ENCODE measurements at regions of chr19 and their contacts with region 1.

Region 1: DNA sequence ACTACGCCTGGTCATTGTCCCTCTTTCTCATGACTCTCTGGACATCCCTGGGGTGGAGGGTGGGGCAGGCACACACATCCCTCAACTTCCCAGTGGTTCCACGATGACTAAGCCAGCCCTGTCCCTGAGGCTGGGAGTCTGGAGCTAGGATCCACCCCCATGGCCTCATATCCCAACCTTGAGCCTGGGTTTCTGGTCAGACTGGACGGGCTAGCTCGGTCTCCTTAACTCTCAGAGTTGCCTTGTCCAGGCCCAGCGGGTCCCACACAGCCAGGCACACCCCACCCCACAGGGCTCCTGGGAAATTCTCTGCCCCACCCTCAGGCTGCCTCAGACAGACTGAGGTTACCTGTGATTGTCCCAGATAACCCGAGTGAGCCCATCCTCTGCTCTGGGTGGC is 19.6 kb downstream of the IER2 start:
- DNase-seq: no peak
- H3K4me3 ChIP-seq: no peak overlapping the region
- H3K27ac ChIP-seq: no peak overlapping the region
- H3K4me1 ChIP-seq: peaks cover 11 to 56% (median 49%) of the 10 kb centered on the region in 4 experiments
- H3K27me3 ChIP-seq: no peaks in the 10 kb centered on the region

Region 2: DNA sequence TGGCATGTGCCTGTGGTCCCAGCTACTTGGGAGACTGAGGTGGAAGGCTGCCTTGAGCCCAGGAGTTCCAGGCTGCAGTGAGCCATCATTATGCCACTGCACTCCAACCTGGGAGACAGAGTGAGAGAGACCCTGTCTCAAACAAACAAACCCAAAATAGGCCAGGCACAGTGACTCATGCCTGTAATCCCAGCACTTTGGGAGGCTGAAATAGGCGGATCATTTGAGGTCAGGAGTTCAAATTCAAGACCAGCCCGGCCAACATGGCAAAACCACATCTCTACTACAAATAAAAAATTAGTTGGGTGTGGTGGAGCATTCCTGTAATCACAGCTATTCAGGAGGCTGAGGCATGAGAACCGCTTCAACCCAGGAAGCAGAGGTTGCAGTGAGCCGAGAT is 26.7 kb before region 1 on chr19:
- CTCF ChIA-PET with region 1: no interaction called
- POLR2A ChIA-PET with region 1: no interaction called
- DNase-seq: no peak
- H3K4me3 ChIP-seq: no peak overlapping the region
- H3K27ac ChIP-seq: no peak overlapping the region
- H3K4me1 ChIP-seq: peaks cover 0 to 6% (median 5%) of the 10 kb centered on the region in 4 experiments
- H3K27me3 ChIP-seq: no peaks in the 10 kb centered on the region

Region 3: GRCh38 chr19:13195678-13196077 is 25.9 kb after region 1 on chr19:
- CTCF ChIA-PET with region 1: interaction called, 11 read pairs
- POLR2A ChIA-PET with region 1: no interaction called
- DNase-seq: peak in 1 of 3 donors; percentile 21
- H3K4me3 ChIP-seq: no peak overlapping the region
- H3K27ac ChIP-seq: no peak overlapping the region
- H3K4me1 ChIP-seq: no peaks in the 10 kb centered on the region
- H3K27me3 ChIP-seq: no peaks in the 10 kb centered on the region